Activated T-helper 1 cell treated with anti-CD3 and anti-CD28 coated beads, Interleukin-12 subunit alpha, Interleukin-12 subunit beta, Interleukin-2, Interleukin-4 antibody, amounts not matched to agents 30 ng/mL and 10 ng/mL and 1 ng/mL, durations not matched to agents 14 hours and 24 hours and 36 hours (primary cell): ENCODE measurements at regions of chr19 and their contacts with region 1.

Region 1: DNA sequence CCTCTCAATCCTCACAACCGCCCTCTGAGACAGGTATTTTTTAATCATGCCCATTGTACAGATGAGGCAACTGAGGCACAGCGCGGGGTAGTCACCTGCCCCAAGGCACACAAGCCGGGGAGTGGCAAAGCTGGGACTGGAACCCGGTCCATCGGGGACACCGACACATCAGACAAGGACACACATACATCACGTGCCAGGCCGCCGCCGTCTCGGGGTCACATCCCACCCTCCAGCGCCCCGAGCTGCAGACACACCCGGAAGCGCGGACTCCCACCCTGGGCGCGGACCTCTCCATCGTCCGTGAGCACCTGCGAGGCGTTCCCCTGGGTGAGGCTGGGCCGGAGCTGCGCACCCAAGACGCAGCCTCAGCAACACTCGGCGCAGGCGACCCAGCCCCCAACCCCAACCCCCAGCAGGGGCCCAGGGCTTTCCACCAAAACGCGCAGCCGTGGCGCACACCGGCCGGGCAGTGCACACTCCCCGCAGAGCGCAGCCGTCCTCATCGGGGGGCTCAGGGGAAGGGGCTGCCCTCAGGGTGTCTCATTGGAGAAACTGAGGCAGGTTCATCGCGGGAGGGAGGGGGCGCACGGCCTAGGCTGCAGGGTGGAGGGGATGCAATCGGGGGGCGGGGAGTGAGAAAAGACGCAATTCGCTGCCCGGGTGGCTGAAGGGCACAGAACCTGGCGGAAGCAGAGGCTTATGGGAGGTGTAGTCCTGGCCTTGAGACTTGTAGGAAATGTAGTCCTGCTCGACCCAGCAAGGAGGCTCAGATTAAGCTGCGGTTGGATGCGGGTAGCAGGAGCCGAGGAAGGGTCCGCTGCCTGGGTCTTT is 1.9 kb upstream of the LMTK3 start:
- DNase-seq: peak; percentile 64
- H3K4me3 Mint-ChIP-seq: no peak overlapping the region
- H3K27ac Mint-ChIP-seq: peak overlapping the region; percentile 46
- H3K4me1 Mint-ChIP-seq: peaks cover 14% of the 10 kb centered on the region
- H3K27me3 Mint-ChIP-seq: peaks cover 3% of the 10 kb centered on the region

Region 2: GRCh38 chr19:48170038-48170812 is 343.3 kb before region 1 on chr19 and contains the starts of genes LIG1 and ZSWIM9:
- intact Hi-C with region 1: loop called (anchors 5 kb)
- DNase-seq: peak; percentile 89
- H3K4me3 Mint-ChIP-seq: peak within 1 kb of the TSS; percentile 97
- H3K27ac Mint-ChIP-seq: peak within 1 kb of the TSS; percentile 100
- H3K4me1 Mint-ChIP-seq: peaks cover 33% of the 10 kb centered on the region
- H3K27me3 Mint-ChIP-seq: peaks cover 3% of the 10 kb centered on the region
- total RNA-seq, gene LIG1: 133 and 140 TPM in 2 replicates
- total RNA-seq, gene ZSWIM9: 8.4 and 9.5 TPM in 2 replicates

Region 3: DNA sequence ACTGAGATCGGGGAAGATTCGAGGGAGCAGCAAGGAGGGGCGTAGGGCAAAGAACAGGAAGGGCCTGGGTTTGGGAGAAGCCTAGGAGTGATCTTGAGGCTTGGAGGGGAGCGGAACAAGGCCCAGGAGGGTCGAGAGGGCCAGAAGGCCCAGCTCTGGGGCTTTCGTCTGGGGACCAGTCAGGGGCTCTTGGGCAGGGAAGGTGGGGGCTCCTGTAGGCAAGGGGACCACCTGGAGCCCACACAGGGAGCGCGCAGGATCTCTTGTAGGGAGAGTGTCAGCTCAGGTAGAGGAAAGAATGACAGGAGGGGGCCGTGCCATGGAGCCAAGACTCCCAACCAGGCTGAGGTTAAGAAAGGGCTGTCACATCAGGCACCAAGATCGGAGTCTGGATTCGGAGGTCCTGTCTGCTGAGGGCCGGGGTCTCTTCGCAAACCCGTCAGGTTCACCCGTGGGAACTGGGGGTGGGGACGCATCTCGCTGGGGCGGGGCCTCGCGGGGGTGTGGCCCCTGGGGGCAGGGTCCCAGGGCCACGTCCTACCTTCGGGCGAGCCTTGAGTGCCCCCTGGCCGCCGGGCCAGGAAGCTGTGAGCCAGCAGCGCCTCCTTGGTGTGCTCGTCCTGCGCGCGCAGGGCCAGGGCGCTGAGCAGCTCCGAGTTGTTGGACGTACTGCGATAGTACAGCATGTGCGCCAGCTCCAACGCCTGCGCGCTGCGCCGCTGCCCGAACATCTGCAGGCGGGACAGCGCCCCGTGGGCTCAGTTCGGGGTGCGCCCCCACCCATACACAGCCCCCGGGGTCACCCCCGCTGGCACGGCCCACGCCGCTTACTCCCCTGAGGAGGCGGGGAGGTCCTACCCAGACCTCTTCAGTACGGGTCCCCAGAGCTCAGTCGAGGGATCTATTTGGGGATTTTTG is 179.8 kb before region 1 on chr19:
- intact Hi-C with region 1: loop called (anchors 5 kb)
- DNase-seq: peak; percentile 92
- H3K4me3 Mint-ChIP-seq: peak overlapping the region; percentile 95
- H3K27ac Mint-ChIP-seq: peak overlapping the region; percentile 97
- H3K4me1 Mint-ChIP-seq: peaks cover 55% of the 10 kb centered on the region
- H3K27me3 Mint-ChIP-seq: peaks cover 1% of the 10 kb centered on the region

Region 4: GRCh38 chr19:48398375-48399235 is 114.9 kb before region 1 on chr19:
- intact Hi-C with region 1: loop called (anchors 5 kb)
- DNase-seq: peak; percentile 84
- H3K4me3 Mint-ChIP-seq: peak overlapping the region; percentile 53
- H3K27ac Mint-ChIP-seq: peak overlapping the region; percentile 34
- H3K4me1 Mint-ChIP-seq: peaks cover 31% of the 10 kb centered on the region
- H3K27me3 Mint-ChIP-seq: peaks cover 39% of the 10 kb centered on the region

Region 5: DNA sequence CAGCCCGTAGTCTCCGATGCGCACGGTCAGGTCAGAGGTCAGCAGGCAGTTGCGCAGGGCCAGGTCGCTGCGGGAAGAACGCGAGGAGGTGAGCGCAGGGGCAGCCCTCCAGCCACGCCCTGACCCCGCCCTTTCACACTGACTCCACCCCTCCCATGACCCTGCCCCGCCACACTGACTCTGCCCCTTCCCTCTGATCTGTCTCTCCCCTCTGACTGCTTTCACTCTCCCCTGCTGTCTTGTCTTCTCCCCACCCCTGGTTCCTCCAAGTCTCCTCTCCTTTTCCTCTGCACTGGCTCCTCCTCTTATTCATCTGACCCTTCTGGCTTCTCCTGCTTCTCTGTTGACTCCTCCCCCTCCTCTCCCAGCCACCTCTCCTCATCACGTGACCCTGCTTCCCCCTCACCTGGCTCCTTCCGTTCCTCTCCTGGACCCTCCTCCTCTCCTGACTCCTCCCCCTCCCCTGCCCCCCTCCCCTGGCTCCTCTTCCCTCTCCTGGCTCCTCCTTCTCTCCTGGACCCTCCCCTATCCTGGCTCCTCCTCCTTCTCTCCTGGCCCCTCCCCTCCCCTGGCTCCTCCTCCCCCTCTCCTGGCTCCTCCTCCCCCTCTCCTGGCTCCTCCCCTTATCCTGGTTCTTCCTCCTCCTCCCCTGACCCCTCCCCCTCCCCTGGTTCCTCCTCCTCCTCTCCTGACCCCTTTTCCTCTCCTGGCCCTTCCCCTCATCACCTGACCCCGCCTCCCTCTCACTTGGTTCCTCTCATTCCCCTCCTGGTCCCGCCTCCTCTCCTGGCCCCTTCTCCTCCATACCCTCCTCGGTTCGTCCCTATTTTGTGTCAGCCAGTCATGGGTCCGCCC is 11.8 kb before region 1 on chr19:
- intact Hi-C with region 1: loop called (anchors 1 kb)
- DNase-seq: peak; percentile 63
- H3K4me3 Mint-ChIP-seq: peak overlapping the region; percentile 54
- H3K27ac Mint-ChIP-seq: peak overlapping the region; percentile 62
- H3K4me1 Mint-ChIP-seq: peaks cover 6% of the 10 kb centered on the region
- H3K27me3 Mint-ChIP-seq: peaks cover 5% of the 10 kb centered on the region

Region 6: GRCh38 chr19:48618916-48619691 is 105.6 kb after region 1 on chr19 and contains the starts of genes RPL18 and SPHK2:
- intact Hi-C with region 1: loop called (anchors 1 kb)
- DNase-seq: peak; percentile 94
- H3K4me3 Mint-ChIP-seq: peak within 1 kb of the TSS; percentile 99
- H3K27ac Mint-ChIP-seq: peak within 1 kb of the TSS; percentile 100
- H3K4me1 Mint-ChIP-seq: peaks cover 50% of the 10 kb centered on the region
- H3K27me3 Mint-ChIP-seq: no peaks in the 10 kb centered on the region
- total RNA-seq, gene RPL18: 1,774 and 1,780 TPM in 2 replicates
- total RNA-seq, gene SPHK2: 40.8 and 44.1 TPM in 2 replicates

Region 7: DNA sequence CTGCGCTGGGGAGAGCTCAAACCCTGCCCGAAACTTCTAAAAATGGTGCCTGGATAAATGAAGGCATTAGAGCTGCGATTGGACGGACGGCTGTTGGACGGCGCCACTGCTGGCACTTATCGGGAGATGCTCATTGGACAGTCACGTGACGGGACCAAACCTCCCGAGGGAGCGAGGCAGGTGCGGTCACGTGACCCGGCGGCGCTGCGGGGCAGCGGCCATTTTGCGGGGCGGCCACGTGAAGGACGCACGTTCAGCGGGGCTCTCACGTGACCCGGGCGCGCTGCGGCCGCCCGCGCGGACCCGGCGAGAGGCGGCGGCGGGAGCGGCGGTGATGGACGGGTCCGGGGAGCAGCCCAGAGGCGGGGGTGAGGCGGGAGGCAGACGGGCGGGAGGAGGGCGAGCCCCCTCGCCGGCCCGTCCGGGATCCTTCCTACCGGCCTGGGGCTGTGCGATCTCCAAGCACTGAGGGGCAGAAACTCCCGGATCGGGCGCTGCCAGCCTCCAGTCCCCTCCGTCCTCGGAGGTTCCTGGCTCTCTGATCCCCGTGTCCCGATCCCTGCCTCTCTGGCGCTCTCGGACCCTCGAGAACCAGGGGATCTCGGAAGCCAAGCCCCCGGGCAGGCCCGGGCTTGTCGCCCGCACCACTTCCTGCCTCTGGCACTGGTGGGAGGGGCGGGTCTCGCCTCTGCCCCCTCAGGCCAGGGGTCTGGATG is 441.2 kb after region 1 on chr19 and contains the start of gene BAX:
- intact Hi-C with region 1: loop called (anchors 10 kb)
- DNase-seq: peak; percentile 92
- H3K4me3 Mint-ChIP-seq: peak within 1 kb of the TSS; percentile 95
- H3K27ac Mint-ChIP-seq: peak within 1 kb of the TSS; percentile 95
- H3K4me1 Mint-ChIP-seq: peaks cover 26% of the 10 kb centered on the region
- H3K27me3 Mint-ChIP-seq: no peaks in the 10 kb centered on the region
- total RNA-seq, gene BAX: 292 and 295 TPM in 2 replicates